GM12878 (cell line): ENCODE measurements at regions of chr7 and their contacts with region 1.

Region 1: GRCh38 chr7:26667500-26668133 is 196.8 kb downstream of the SKAP2 start:
- DNase-seq: peak; percentile 36
- ATAC-seq: peak; percentile 82
- H3K4me3 ChIP-seq: no peak overlapping the region
- H3K27ac ChIP-seq: no peak overlapping the region
- H3K4me1 ChIP-seq: no peaks in the 10 kb centered on the region
- H3K27me3 ChIP-seq: no peaks in the 10 kb centered on the region
- CTCF ChIP-seq: peak; percentile 64 to 91 (median 80); a peak in 5 of 6 replicates
- EP300 ChIP-seq: no peak
- POLR2A ChIP-seq: no peak
- RAD21 ChIP-seq: peak; percentile 78

Region 2: DNA sequence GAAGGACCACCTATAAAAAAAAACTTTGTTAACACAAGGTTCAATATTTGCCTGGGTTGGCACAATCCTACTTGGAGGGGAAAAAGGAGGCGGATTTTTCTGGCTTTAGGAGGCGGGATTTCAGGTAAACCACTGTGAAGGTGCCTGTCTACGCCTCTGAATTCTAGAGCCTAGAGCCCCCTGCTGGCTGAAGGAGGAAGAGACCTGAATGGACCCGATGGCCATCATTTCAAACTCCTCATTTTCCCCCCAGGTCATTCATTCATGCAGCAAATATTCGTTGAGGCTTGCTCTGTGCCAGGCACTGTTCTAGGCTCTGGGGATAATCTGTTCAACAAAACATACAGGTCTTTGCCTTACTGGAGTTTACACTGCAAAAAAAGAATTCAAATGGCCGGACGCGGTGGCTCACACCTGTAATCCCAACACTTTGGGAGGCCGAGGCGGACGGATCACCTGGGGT is 605.9 kb before region 1 on chr7:
- CTCF ChIA-PET with region 1: interaction called, 3 read pairs
- POLR2A ChIA-PET with region 1: no interaction called
- RAD21 ChIA-PET with region 1: no interaction called
- SMC1A ChIA-PET with region 1: no interaction called
- in situ Hi-C with region 1: no loop called
- intact Hi-C with region 1: loop called (anchors 10 kb)
- DNase-seq: peak; percentile 37
- ATAC-seq: peak; percentile 98
- H3K4me3 ChIP-seq: no peak overlapping the region
- H3K27ac ChIP-seq: no peak overlapping the region
- H3K4me1 ChIP-seq: no peaks in the 10 kb centered on the region
- H3K27me3 ChIP-seq: no peaks in the 10 kb centered on the region; a peak in 1 of 4 replicates
- CTCF ChIP-seq: peak; percentile 86 to 87 (median 87)
- EP300 ChIP-seq: no peak
- POLR2A ChIP-seq: no peak
- RAD21 ChIP-seq: peak; percentile 90

Region 3: DNA sequence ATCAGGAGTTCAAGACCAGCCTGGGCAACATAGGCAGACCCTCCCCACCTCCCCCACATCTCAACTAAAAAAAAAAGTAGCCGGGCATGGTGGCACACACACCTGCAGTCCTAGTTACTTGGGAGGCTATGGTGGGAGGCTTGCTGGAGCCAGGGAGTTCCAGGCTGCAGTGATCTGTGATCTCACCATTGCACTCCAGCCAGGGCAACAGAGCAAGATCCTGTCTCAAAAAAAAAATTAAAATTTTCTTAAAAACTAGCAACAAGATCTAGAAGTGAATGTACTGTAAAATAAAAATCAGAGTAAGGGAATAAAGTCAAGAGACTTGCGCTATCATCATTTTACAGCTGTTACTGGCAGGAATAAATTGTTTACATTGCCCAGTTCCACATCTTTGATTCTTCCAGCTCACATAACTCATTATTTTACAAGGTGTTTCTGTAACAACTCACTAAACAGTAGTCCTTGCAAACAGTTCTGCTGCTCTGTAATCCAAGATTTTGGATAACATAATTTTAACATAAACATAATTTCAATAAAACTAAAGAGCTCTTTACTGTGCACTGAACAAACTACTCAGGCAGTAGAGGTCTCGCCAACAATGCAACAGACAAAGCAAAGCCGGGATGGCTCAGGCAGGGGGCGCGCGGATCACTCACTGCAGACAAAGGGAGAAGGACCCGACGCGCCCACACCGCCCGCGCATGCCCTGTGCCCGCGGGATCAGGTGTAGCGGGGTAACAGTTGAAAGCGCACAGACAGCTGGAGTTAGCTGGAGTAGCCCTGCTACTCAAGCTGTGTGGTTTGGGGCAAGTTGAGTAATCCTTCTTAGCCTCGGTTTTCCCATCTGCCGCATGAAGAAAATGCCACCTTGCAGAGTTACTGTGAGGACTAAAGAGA is 588.9 kb before region 1 on chr7:
- CTCF ChIA-PET with region 1: interaction called, 3 read pairs
- POLR2A ChIA-PET with region 1: no interaction called
- RAD21 ChIA-PET with region 1: no interaction called
- SMC1A ChIA-PET with region 1: interaction called, 3 read pairs
- in situ Hi-C with region 1: loop called (anchors 10 kb)
- intact Hi-C with region 1: no loop called
- DNase-seq: peak; percentile 36
- ATAC-seq: peak; percentile 98
- H3K4me3 ChIP-seq: no peak overlapping the region
- H3K27ac ChIP-seq: no peak overlapping the region
- H3K4me1 ChIP-seq: no peaks in the 10 kb centered on the region
- H3K27me3 ChIP-seq: peaks cover 2 to 5% of the 10 kb centered on the region in 2 experiments; a peak in 1 of 4 replicates
- CTCF ChIP-seq: peak; percentile 50 to 61 (median 53); a peak in 5 of 6 replicates
- EP300 ChIP-seq: no peak
- POLR2A ChIP-seq: no peak
- RAD21 ChIP-seq: peak; percentile 60

Region 4: GRCh38 chr7:26278770-26279169 is 388.8 kb before region 1 on chr7:
- CTCF ChIA-PET with region 1: no interaction called
- POLR2A ChIA-PET with region 1: no interaction called
- RAD21 ChIA-PET with region 1: no interaction called
- SMC1A ChIA-PET with region 1: no interaction called
- in situ Hi-C with region 1: no loop called
- intact Hi-C with region 1: loop called (anchors 10 kb)
- DNase-seq: no peak
- ATAC-seq: peak; percentile 84
- H3K4me3 ChIP-seq: no peak overlapping the region
- H3K27ac ChIP-seq: no peak overlapping the region
- H3K4me1 ChIP-seq: no peaks in the 10 kb centered on the region
- H3K27me3 ChIP-seq: no peaks in the 10 kb centered on the region
- CTCF ChIP-seq: peak; percentile 20 to 57 (median 42); a peak in 4 of 6 replicates
- EP300 ChIP-seq: no peak
- POLR2A ChIP-seq: no peak
- RAD21 ChIP-seq: peak; percentile 24; the same call in 1 of the 2 replicates

Region 5: GRCh38 chr7:26376175-26376917 is 291.3 kb before region 1 on chr7:
- CTCF ChIA-PET with region 1: interaction called, 14 read pairs
- POLR2A ChIA-PET with region 1: no interaction called
- RAD21 ChIA-PET with region 1: interaction called, 5 read pairs
- SMC1A ChIA-PET with region 1: interaction called, 7 read pairs
- in situ Hi-C with region 1: no loop called
- intact Hi-C with region 1: loop called (anchors 1 kb)
- DNase-seq: no peak
- ATAC-seq: peak; percentile 71
- H3K4me3 ChIP-seq: peak overlapping the region; percentile 63
- H3K27ac ChIP-seq: no peak overlapping the region
- H3K4me1 ChIP-seq: peaks cover 7% of the 10 kb centered on the region
- H3K27me3 ChIP-seq: no peaks in the 10 kb centered on the region
- CTCF ChIP-seq: no peak
- EP300 ChIP-seq: no peak
- POLR2A ChIP-seq: no peak
- RAD21 ChIP-seq: no peak

Region 6: DNA sequence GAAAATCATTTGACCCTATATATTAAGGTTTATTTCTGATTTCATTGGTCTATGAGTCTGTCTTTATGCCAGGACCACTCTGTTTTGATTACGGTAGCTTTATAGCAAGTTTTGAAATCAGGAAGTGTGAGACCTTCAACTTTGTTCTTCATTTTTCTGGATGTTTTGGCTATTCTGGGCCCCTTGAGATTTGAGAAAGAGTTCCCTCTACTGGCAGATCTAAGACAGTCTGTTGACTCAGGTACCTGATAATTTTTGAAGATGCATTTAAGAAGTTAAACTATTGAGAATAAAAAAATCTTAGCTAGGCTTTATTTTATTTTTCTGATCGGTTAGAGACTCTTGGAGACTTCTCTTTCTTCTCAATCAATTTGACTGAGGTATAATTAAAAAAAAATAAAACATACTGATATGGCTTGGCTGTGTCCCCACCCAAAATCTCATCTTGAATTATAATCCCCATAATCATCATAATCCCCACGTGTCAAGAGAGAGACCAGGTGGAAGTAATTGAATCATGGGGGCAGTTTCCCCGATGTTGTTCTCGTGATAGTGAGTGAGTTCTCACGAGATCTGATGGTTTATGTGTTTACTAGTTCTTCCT is 166.8 kb before region 1 on chr7:
- CTCF ChIA-PET with region 1: interaction called, 6 read pairs
- POLR2A ChIA-PET with region 1: no interaction called
- RAD21 ChIA-PET with region 1: no interaction called
- SMC1A ChIA-PET with region 1: interaction called, 4 read pairs
- in situ Hi-C with region 1: no loop called
- intact Hi-C with region 1: loop called (anchors 5 kb)
- DNase-seq: no peak
- ATAC-seq: peak; percentile 82
- H3K4me3 ChIP-seq: no peak overlapping the region
- H3K27ac ChIP-seq: no peak overlapping the region
- H3K4me1 ChIP-seq: no peaks in the 10 kb centered on the region
- H3K27me3 ChIP-seq: no peaks in the 10 kb centered on the region; a peak in 1 of 4 replicates
- CTCF ChIP-seq: peak; percentile 57 to 60 (median 57)
- EP300 ChIP-seq: no peak
- POLR2A ChIP-seq: no peak
- RAD21 ChIP-seq: peak; percentile 83

Region 7: DNA sequence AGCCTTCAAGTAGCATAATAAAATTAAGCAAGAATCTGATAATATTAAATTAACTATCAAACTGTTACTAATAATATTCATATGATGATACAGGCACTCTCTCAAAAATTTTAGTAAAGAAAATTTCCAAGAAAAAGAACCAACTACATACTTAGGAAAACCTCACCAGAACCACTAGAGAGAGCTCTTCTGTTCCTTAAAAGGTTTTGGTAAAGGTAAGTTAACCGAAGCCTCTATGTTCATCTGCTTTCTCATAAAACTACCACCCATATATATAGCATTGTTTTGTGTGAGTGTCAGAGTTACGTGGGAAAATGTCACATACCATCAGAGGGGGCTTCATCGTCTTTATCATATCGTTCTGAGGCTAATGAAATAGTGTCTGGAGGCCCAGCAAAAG is 176.1 kb after region 1 on chr7:
- CTCF ChIA-PET with region 1: no interaction called
- POLR2A ChIA-PET with region 1: no interaction called
- RAD21 ChIA-PET with region 1: no interaction called
- SMC1A ChIA-PET with region 1: no interaction called
- in situ Hi-C with region 1: no loop called
- intact Hi-C with region 1: no loop called
- DNase-seq: no peak
- ATAC-seq: no peak
- H3K4me3 ChIP-seq: no peak overlapping the region
- H3K27ac ChIP-seq: no peak overlapping the region
- H3K4me1 ChIP-seq: no peaks in the 10 kb centered on the region
- H3K27me3 ChIP-seq: no peaks in the 10 kb centered on the region
- CTCF ChIP-seq: 0 out of 6 replicates have a peak, but pooled peaks of 1 of the 3 experiments have one; percentile 6
- EP300 ChIP-seq: no peak
- POLR2A ChIP-seq: no peak
- RAD21 ChIP-seq: no peak